Breast epithelium (tissue), 4 donors: ENCODE measurements at regions of chr4 and their contacts with region 1.

Region 1: DNA sequence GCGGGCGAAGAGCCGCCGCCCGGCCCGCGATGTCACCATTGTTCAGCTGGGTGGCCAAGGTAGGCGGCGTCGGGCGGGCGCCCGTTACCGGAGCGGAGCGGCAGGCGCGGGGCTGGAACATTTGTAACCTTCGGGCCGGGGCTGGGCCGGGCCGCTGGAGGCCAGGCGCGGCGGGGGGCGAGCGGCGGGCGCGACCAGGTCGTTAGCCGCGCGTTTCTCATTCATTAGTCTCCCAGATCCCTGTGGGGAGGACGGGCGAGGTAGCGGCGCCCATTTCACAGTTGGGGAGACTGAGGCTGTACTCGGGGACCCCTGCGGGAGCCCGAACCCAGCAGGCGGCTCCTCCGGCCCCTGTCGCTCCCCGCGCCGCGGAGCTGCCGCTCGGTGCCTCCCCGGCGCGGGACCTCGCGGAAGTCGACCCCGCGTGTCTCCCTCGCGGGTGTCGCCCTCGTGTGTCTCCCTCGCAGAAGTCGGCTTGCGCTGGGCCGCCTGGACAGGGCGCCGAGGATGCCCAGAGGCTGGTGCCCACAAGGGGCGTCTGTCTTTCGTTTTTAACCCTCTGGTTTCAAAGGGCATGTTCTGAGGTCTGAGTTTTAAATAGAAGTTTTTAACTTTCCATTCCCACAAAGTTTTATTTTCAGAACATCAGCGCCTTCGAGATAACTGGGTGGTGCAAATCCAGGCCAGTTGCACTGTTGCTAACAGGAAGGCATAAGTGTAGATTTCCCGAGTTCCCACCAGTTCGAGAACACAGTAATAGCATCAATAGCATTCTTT is 17.5 kb downstream of the PTTG2 start:
- DNase-seq: peak; percentile 51 to 59
- H3K4me3 ChIP-seq: peak overlapping the region; percentile 73 to 88 (median 79)
- H3K27ac ChIP-seq: peak overlapping the region; percentile 84 to 93
- H3K4me1 ChIP-seq: no peaks in the 10 kb centered on the region
- H3K27me3 ChIP-seq: no peaks in the 10 kb centered on the region
- CTCF ChIP-seq: peak in 2 of 3 donors; percentile 40 to 57
- POLR2A ChIP-seq: no peak

Region 2: GRCh38 chr4:37516057-37516775 is 461.4 kb before region 1 on chr4:
- intact Hi-C with region 1: no loop called
- DNase-seq: no peak
- H3K4me3 ChIP-seq: no peak overlapping the region
- H3K27ac ChIP-seq: no peak overlapping the region
- H3K4me1 ChIP-seq: no peaks in the 10 kb centered on the region
- H3K27me3 ChIP-seq: no peaks in the 10 kb centered on the region
- CTCF ChIP-seq: no peak
- POLR2A ChIP-seq: no peak

Region 3: GRCh38 chr4:37879365-37879764 is 98.3 kb before region 1 on chr4:
- intact Hi-C with region 1: loop called (anchors 5 kb)
- DNase-seq: no peak
- H3K4me3 ChIP-seq: no peak overlapping the region
- H3K27ac ChIP-seq: no peak overlapping the region
- H3K4me1 ChIP-seq: no peaks in the 10 kb centered on the region
- H3K27me3 ChIP-seq: no peaks in the 10 kb centered on the region
- CTCF ChIP-seq: no peak
- POLR2A ChIP-seq: no peak